Activated CD8-positive, alpha-beta T cell treated with anti-CD3 and anti-CD28 coated beads for 36 hours (primary cell): ENCODE measurements at regions of chr17 and their contacts with region 1.

Region 1: DNA sequence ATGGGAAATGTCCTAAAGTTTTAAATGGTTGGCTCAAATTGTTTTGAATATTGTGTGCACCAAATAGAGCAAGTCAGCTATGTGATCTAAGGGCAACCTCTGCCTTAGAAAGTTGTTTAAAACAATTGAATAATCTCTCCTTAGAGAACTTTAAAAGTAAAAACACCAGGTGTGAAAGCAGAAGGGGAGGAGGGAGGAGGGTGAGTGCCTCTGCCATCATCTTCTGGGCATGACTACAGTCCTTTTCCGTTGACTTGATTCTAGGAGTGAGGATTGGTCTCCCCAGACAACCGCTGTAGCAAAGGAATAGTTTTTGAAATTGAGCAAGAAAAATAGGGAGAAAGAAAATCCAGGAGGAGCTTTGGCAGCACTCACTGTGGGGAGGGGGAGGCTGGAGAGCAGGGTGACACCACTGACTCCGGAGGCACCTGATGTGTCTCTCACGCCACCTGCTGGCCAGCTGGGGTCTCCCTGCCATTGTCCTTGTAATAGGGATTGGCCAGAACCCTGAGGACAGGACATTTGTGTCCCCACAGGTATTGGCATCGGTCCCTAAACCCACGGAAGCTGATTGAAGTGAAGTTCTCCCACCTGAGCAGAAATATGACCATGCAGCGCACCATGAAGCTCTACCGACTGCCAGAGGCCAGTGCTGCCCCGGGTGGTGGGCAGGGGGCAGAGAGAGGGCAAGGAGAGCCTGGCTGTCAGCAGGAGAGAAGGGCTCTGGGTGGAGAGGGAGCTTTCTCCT is 33.3 kb downstream of the PLCD3 start:
- DNase-seq: peak; percentile 85
- ATAC-seq: peak; percentile 89
- H3K4me3 Mint-ChIP-seq: no peak overlapping the region
- H3K27ac Mint-ChIP-seq: peak overlapping the region; percentile 53
- H3K4me1 Mint-ChIP-seq: no peaks in the 10 kb centered on the region
- H3K27me3 Mint-ChIP-seq: no peaks in the 10 kb centered on the region
- CTCF ChIP-seq: peak; percentile 92

Region 2: DNA sequence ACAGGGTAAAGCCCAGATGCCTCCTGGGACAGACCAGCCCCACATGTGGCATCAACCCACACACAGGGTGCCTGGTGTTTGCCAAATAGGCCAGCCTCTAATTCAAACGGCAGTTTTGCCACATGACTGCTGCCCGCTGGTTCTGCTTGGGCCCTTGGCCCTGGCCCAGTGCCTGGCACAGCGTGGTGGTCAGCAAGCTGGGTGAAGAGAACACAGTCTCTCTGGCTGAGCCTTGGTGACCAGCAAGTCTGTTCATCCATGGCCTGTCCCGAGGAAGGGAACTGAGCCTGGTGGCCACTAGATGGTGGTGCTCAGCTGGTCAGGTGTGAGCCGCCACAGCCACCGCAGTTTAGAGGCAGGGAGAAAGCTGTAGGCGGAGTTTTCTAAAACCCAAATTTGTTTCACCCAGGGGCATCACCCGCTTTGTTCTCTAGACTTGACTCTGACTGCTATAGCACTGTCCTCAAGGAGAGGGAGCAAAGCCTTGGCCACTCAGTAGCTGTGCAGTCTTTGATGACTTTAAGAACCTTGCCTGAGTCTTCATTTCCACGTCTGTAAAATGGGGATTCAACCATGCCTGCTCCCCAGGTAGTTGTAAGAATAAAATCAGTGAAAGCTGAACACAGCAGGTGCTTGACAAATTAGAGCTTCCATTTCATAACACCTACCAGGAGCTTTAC is 179.0 kb before region 1 on chr17:
- CTCF ChIA-PET with region 1: interaction called, 14 read pairs
- POLR2A ChIA-PET with region 1: no interaction called
- intact Hi-C with region 1: no loop called
- DNase-seq: peak; percentile 83
- ATAC-seq: peak; percentile 95
- H3K4me3 Mint-ChIP-seq: no peak overlapping the region
- H3K27ac Mint-ChIP-seq: no peak overlapping the region
- H3K4me1 Mint-ChIP-seq: peaks cover 4% of the 10 kb centered on the region
- H3K27me3 Mint-ChIP-seq: peaks cover 12% of the 10 kb centered on the region
- CTCF ChIP-seq: peak; percentile 27

Region 3: DNA sequence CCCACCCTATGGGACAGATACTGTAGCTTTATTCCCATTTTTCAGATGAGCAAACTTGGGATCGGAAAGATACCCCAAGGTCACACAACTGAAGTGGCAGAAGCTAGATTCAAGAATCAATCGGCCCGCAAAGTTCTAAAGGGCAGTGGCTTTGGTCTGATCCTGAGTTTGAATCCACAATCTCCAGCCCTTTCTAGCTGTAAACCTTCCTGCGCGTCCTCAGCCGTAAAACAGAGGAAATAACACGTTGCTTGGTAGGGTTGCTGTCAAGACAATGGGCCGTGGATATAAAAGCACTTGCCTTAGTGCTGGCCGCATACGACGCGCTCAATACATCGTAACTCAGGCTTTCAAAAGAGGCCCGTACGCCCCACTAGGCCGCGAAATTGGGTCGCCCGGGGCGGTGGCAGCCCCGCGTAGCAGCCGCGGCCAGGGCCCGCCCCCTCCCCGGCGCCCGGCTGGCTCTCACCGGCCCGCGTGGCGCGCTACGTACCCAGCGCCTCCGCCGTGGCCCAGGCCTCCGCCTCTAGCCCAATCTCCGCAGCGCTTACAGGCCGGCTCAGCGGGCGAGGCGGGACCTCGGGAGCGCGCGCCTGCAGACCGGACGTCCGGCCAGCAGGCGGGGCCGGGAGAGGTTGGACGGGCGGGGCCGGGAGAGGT is 47.9 kb before region 1 on chr17 and contains the start of gene DCAKD:
- CTCF ChIA-PET with region 1: interaction called, 16 read pairs
- POLR2A ChIA-PET with region 1: interaction called, 3 read pairs
- intact Hi-C with region 1: no loop called
- DNase-seq: peak; percentile 94
- ATAC-seq: peak; percentile 97
- H3K4me3 Mint-ChIP-seq: peak within 1 kb of the TSS; percentile 84
- H3K27ac Mint-ChIP-seq: peak within 1 kb of the TSS; percentile 96
- H3K4me1 Mint-ChIP-seq: peaks cover 44% of the 10 kb centered on the region
- H3K27me3 Mint-ChIP-seq: no peaks in the 10 kb centered on the region
- CTCF ChIP-seq: no peak
- total RNA-seq, gene DCAKD: 34.3 to 35.8 TPM

Region 4: GRCh38 chr17:45081042-45081703 is 17.9 kb before region 1 on chr17:
- CTCF ChIA-PET with region 1: interaction called, 31 read pairs
- POLR2A ChIA-PET with region 1: interaction called, 3 read pairs
- intact Hi-C with region 1: no loop called
- DNase-seq: no peak
- ATAC-seq: no peak
- H3K4me3 Mint-ChIP-seq: no peak overlapping the region
- H3K27ac Mint-ChIP-seq: no peak overlapping the region
- H3K4me1 Mint-ChIP-seq: peaks cover 15% of the 10 kb centered on the region
- H3K27me3 Mint-ChIP-seq: no peaks in the 10 kb centered on the region
- CTCF ChIP-seq: no peak

Region 5: GRCh38 chr17:45087504-45087975 is 11.5 kb before region 1 on chr17:
- CTCF ChIA-PET with region 1: interaction called, 31 read pairs
- POLR2A ChIA-PET with region 1: interaction called, 3 read pairs
- intact Hi-C with region 1: no loop called
- DNase-seq: no peak
- ATAC-seq: no peak
- H3K4me3 Mint-ChIP-seq: no peak overlapping the region
- H3K27ac Mint-ChIP-seq: no peak overlapping the region
- H3K4me1 Mint-ChIP-seq: peaks cover 2% of the 10 kb centered on the region
- H3K27me3 Mint-ChIP-seq: no peaks in the 10 kb centered on the region
- CTCF ChIP-seq: no peak

Region 6: GRCh38 chr17:45115871-45116724 is 17.1 kb after region 1 on chr17:
- CTCF ChIA-PET with region 1: interaction called, 15 read pairs
- POLR2A ChIA-PET with region 1: no interaction called
- intact Hi-C with region 1: no loop called
- DNase-seq: no peak
- ATAC-seq: no peak
- H3K4me3 Mint-ChIP-seq: no peak overlapping the region
- H3K27ac Mint-ChIP-seq: no peak overlapping the region
- H3K4me1 Mint-ChIP-seq: no peaks in the 10 kb centered on the region
- H3K27me3 Mint-ChIP-seq: no peaks in the 10 kb centered on the region
- CTCF ChIP-seq: no peak

Region 7: GRCh38 chr17:45155483-45155882 is 56.4 kb after region 1 on chr17:
- CTCF ChIA-PET with region 1: no interaction called
- POLR2A ChIA-PET with region 1: no interaction called
- intact Hi-C with region 1: no loop called
- DNase-seq: no peak
- ATAC-seq: no peak
- H3K4me3 Mint-ChIP-seq: no peak overlapping the region
- H3K27ac Mint-ChIP-seq: peak overlapping the region; percentile 71
- H3K4me1 Mint-ChIP-seq: peaks cover 53% of the 10 kb centered on the region
- H3K27me3 Mint-ChIP-seq: no peaks in the 10 kb centered on the region
- CTCF ChIP-seq: no peak

Region 8: GRCh38 chr17:45177563-45178169 is 78.6 kb after region 1 on chr17:
- CTCF ChIA-PET with region 1: no interaction called
- POLR2A ChIA-PET with region 1: no interaction called
- intact Hi-C with region 1: no loop called
- DNase-seq: no peak
- ATAC-seq: no peak
- H3K4me3 Mint-ChIP-seq: no peak overlapping the region
- H3K27ac Mint-ChIP-seq: no peak overlapping the region
- H3K4me1 Mint-ChIP-seq: peaks cover 6% of the 10 kb centered on the region
- H3K27me3 Mint-ChIP-seq: no peaks in the 10 kb centered on the region
- CTCF ChIP-seq: no peak